ENCODE measurements at regions of chr10 and their contacts with region 1.

Region 1: GRCh38 chr10:47261121-47261520 is 38.9 kb upstream of the GDF10 start:
- DNase-seq: peak; percentile 80
- H3K4me3 Mint-ChIP-seq: peak overlapping the region; percentile 71
- H3K27ac Mint-ChIP-seq: peak overlapping the region; percentile 95
- H3K4me1 Mint-ChIP-seq: peaks cover 69% of the 10 kb centered on the region
- H3K27me3 Mint-ChIP-seq: no peaks in the 10 kb centered on the region

Region 2: DNA sequence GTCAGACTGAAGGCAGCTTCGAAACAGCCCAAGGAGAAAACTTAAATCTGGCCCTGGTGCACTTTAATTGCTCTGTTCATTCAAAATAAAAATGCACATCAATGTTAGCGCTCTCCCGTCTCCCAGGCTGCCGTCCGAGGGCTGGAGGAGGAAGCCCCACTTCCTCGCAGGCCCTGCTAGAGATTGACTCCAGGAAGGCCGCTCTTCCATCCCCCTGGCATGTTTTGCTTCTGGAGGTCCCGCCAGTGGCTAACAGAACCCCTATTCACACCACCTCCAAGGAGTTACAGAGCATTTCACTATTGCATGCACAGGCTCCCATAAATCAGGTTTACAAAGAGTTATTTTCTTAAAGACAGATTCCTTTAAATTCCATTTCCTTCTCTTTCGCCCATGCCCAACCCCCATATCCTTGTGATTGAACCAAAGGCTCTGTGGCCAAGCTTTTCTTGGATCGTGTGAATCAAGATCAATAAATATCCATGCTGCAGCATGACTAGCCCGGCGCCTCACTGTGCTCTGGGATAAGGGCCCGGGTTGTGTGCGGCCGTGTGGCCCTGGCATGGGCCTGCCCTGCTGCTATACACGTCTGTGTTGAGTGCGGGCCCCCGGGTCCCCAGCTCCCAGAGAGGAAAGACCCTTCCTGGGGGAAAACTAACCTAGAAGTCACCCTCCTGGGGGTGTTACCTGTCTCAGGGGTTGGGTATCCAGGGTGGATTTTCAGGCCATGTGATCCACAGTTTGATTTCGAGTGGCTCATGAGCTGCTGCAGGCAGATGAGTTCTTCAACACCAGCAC is 79.9 kb before region 1 on chr10:
- intact Hi-C with region 1: loop called (anchors 5 kb)
- DNase-seq: peak; percentile 64
- H3K4me3 Mint-ChIP-seq: no peak overlapping the region
- H3K27ac Mint-ChIP-seq: no peak overlapping the region
- H3K4me1 Mint-ChIP-seq: no peaks in the 10 kb centered on the region
- H3K27me3 Mint-ChIP-seq: no peaks in the 10 kb centered on the region

Region 3: DNA sequence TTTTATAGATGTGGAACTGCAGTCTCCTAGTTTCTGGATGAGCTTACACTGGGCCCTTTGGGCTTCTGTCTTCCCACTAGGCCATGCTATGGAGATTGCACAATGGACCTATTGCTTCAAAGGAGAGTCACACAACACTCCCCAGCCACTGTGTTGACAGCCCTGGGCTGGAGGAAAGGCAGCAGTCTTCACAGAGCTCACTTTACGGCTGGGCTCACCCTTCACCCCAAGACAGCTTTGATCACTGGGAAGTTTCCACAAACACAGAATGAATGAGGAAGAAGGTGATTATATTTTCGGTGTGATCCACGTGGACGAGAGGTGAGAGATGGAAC is 53.9 kb before region 1 on chr10:
- intact Hi-C with region 1: loop called (anchors 2 kb)
- DNase-seq: no peak
- H3K4me3 Mint-ChIP-seq: peak overlapping the region; percentile 7
- H3K27ac Mint-ChIP-seq: peak overlapping the region; percentile 73
- H3K4me1 Mint-ChIP-seq: peaks cover 21% of the 10 kb centered on the region
- H3K27me3 Mint-ChIP-seq: no peaks in the 10 kb centered on the region

Region 4: GRCh38 chr10:47277352-47278151 is 16.4 kb after region 1 on chr10:
- intact Hi-C with region 1: loop called (anchors 2 kb)
- DNase-seq: peak; percentile 84
- H3K4me3 Mint-ChIP-seq: peak overlapping the region; percentile 39
- H3K27ac Mint-ChIP-seq: peak overlapping the region; percentile 77
- H3K4me1 Mint-ChIP-seq: peaks cover 26% of the 10 kb centered on the region
- H3K27me3 Mint-ChIP-seq: no peaks in the 10 kb centered on the region